Uterus (tissue), 4 donors: ENCODE measurements at regions of chr1 and their contacts with region 1.

Region 1: GRCh38 chr1:156601122-156601830 is at the start of gene GPATCH4:
- DNase-seq: peak; percentile 84 to 86
- H3K4me3 ChIP-seq: peak within 1 kb of the TSS; percentile 54 to 86
- H3K27ac ChIP-seq: peak within 1 kb of the TSS; percentile 66 to 88
- H3K4me1 ChIP-seq: peaks cover 0 to 11% of the 10 kb centered on the region in 2 donors
- H3K27me3 ChIP-seq: no peaks in the 10 kb centered on the region
- CTCF ChIP-seq: no peak
- POLR2A ChIP-seq: peak in 1 of 2 donors; percentile 36
- total RNA-seq, gene GPATCH4: 2.3 to 31.6 (median 19.8) TPM

Region 2: GRCh38 chr1:156347331-156347730 is 253.9 kb before region 1 on chr1:
- intact Hi-C with region 1: no loop called
- DNase-seq: no peak
- H3K4me3 ChIP-seq: no peak overlapping the region
- H3K27ac ChIP-seq: no peak overlapping the region
- H3K4me1 ChIP-seq: no peaks in the 10 kb centered on the region
- H3K27me3 ChIP-seq: no peaks in the 10 kb centered on the region
- CTCF ChIP-seq: no peak
- POLR2A ChIP-seq: no peak

Region 3: GRCh38 chr1:156456622-156457465 is 144.4 kb before region 1 on chr1:
- intact Hi-C with region 1: loop called (anchors 10 kb)
- DNase-seq: peak; percentile 98 to 99
- H3K4me3 ChIP-seq: peak overlapping the region; percentile 42 to 50
- H3K27ac ChIP-seq: peak overlapping the region; percentile 98 to 99
- H3K4me1 ChIP-seq: peaks cover 0 to 7% of the 10 kb centered on the region in 2 donors
- H3K27me3 ChIP-seq: no peaks in the 10 kb centered on the region
- CTCF ChIP-seq: peak in 1 of 4 experiments; percentile 3
- POLR2A ChIP-seq: peak; percentile 85 to 94